Calu3 (cell line): ENCODE measurements at regions of chr3 and their contacts with region 1.

Region 1: GRCh38 chr3:140736863-140737460 is 59.1 kb downstream of the TRIM42 start:
- DNase-seq: peak; percentile 73
- H3K4me3 Mint-ChIP-seq: no peak overlapping the region
- H3K27ac Mint-ChIP-seq: no peak overlapping the region
- H3K4me1 Mint-ChIP-seq: no peaks in the 10 kb centered on the region
- H3K27me3 Mint-ChIP-seq: peaks cover 98% of the 10 kb centered on the region
- CTCF ChIP-seq: peak; percentile 74

Region 2: DNA sequence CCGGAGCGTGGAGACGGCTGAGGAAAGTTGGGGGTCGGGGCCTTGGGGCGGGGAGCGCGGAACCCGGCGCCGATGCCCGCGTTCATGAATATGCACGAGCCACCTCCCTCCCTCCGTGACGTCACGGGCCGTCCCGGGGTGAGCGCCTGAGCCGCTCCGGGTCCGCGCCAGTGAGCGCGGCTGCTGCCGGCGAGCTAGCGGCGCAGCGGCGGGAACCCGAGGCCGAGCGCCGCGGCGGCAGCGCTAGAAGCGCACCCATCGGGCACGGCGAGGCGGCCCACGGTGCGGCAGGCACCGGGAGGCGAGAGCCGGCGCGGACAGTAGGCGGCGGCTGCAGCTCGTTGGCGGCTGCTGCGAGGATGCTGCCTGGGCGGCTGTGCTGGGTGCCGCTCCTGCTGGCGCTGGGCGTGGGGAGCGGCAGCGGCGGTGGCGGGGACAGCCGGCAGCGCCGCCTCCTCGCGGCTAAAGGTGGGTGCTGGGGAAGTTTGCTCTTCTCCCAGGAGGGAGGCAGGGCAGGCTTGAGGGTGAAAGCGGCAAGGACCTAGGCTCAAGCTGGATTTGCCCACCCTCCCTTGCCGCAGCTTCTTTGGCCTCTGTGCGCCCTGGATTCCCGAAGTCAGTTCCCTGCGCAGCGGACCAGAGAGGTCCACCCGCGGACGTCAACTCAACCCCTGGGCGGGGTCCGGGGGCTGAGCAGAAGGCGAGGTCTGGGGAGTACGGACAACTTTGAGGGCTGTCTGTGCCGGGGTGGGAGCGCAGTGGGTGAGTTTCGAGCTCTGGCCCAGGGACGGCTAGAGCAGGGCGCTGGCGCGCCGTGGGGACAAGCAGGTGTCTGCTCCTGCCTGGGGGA is 801.7 kb before region 1 on chr3 and contains the start of gene CLSTN2:
- CTCF ChIA-PET with region 1: interaction called, 4 read pairs
- intact Hi-C with region 1: loop called (anchors 5 kb)
- DNase-seq: peak; percentile 63
- H3K4me3 Mint-ChIP-seq: peak within 1 kb of the TSS; percentile 79
- H3K27ac Mint-ChIP-seq: no peak within 1 kb of the TSS
- H3K4me1 Mint-ChIP-seq: peaks cover 12% of the 10 kb centered on the region
- H3K27me3 Mint-ChIP-seq: peaks cover 81% of the 10 kb centered on the region
- CTCF ChIP-seq: no peak
- total RNA-seq, gene CLSTN2: 0.07 TPM in 2 replicates

Region 3: GRCh38 chr3:140276703-140277102 is 460.3 kb before region 1 on chr3:
- CTCF ChIA-PET with region 1: no interaction called
- intact Hi-C with region 1: loop called (anchors 1 kb)
- DNase-seq: peak; percentile 21
- H3K4me3 Mint-ChIP-seq: no peak overlapping the region
- H3K27ac Mint-ChIP-seq: no peak overlapping the region
- H3K4me1 Mint-ChIP-seq: no peaks in the 10 kb centered on the region
- H3K27me3 Mint-ChIP-seq: peaks cover 84% of the 10 kb centered on the region
- CTCF ChIP-seq: no peak

Region 4: GRCh38 chr3:140386357-140387100 is 350.4 kb before region 1 on chr3:
- CTCF ChIA-PET with region 1: no interaction called
- intact Hi-C with region 1: loop called (anchors 10 kb)
- DNase-seq: no peak
- H3K4me3 Mint-ChIP-seq: no peak overlapping the region
- H3K27ac Mint-ChIP-seq: no peak overlapping the region
- H3K4me1 Mint-ChIP-seq: no peaks in the 10 kb centered on the region
- H3K27me3 Mint-ChIP-seq: no peaks in the 10 kb centered on the region
- CTCF ChIP-seq: no peak

Region 5: DNA sequence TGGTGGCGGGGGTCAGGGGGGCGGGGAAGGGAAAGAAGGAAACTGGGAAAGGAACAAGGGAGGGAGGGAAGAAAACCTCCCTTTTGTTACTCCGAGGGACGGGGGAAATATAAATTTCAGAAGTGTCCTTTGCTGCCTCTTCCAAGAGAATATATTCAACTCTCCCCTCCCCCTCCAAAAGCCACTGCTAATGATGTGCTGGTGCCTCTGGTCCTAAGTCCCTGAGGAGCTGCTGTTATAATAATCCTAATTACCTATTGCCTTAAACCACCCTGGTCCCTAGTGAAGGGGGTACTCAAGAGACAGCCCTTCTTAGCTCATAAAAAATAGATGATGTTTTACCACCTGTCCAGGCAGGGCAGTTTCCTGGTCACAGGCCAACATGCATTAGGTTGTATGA is 177.4 kb before region 1 on chr3:
- CTCF ChIA-PET with region 1: no interaction called
- intact Hi-C with region 1: loop called (anchors 5 kb)
- DNase-seq: no peak
- H3K4me3 Mint-ChIP-seq: no peak overlapping the region
- H3K27ac Mint-ChIP-seq: no peak overlapping the region
- H3K4me1 Mint-ChIP-seq: no peaks in the 10 kb centered on the region
- H3K27me3 Mint-ChIP-seq: peaks cover 48% of the 10 kb centered on the region
- CTCF ChIP-seq: no peak

Region 6: GRCh38 chr3:140863580-140864009 is 126.6 kb after region 1 on chr3:
- CTCF ChIA-PET with region 1: no interaction called
- intact Hi-C with region 1: loop called (anchors 1 kb)
- DNase-seq: peak; percentile 84
- H3K4me3 Mint-ChIP-seq: no peak overlapping the region
- H3K27ac Mint-ChIP-seq: no peak overlapping the region
- H3K4me1 Mint-ChIP-seq: no peaks in the 10 kb centered on the region
- H3K27me3 Mint-ChIP-seq: peaks cover 57% of the 10 kb centered on the region
- CTCF ChIP-seq: peak; percentile 64